Lower leg skin (tissue), 4 donors: ENCODE measurements at regions of chr7 and their contacts with region 1.

Region 1: GRCh38 chr7:23273141-23273599 is 26.0 kb upstream of the MALSU1 start:
- DNase-seq: peak; percentile 75 to 94
- H3K4me3 ChIP-seq: no peak overlapping the region
- CTCF ChIP-seq: no peak
- POLR2A ChIP-seq: no peak

Region 2: GRCh38 chr7:23181684-23182553 is 91.3 kb before region 1 on chr7 and contains the start of gene NUP42:
- intact Hi-C with region 1: loop called (anchors 10 kb)
- DNase-seq: peak; percentile 94 to 99
- H3K4me3 ChIP-seq: peak within 1 kb of the TSS; percentile 73
- CTCF ChIP-seq: no peak
- POLR2A ChIP-seq: no peak
- total RNA-seq, gene NUP42: 24.6 to 34.4 (median 28.1) TPM

Region 3: GRCh38 chr7:23546897-23547572 is 273.9 kb after region 1 on chr7:
- intact Hi-C with region 1: loop called (anchors 10 kb)
- DNase-seq: peak; percentile 80 to 92
- H3K4me3 ChIP-seq: no peak overlapping the region
- CTCF ChIP-seq: peak in 1 of 3 donors; percentile 77
- POLR2A ChIP-seq: no peak